CD8-positive, alpha-beta memory T cell (primary cell): ENCODE measurements at regions of chr9 and their contacts with region 1.

Region 1: GRCh38 chr9:30723656-30724055 is 1660.8 kb upstream of the ACO1 start:
- DNase-seq: no peak
- H3K4me3 ChIP-seq: no peak overlapping the region
- H3K4me3 Mint-ChIP-seq: no peak overlapping the region
- H3K27ac ChIP-seq: no peak overlapping the region
- H3K27ac Mint-ChIP-seq: no peak overlapping the region
- H3K4me1 ChIP-seq: no peaks in the 10 kb centered on the region
- H3K4me1 Mint-ChIP-seq: no peaks in the 10 kb centered on the region
- H3K27me3 ChIP-seq: no peaks in the 10 kb centered on the region
- H3K27me3 Mint-ChIP-seq: no peaks in the 10 kb centered on the region

Region 2: GRCh38 chr9:29974197-29974596 is 749.5 kb before region 1 on chr9:
- CTCF ChIA-PET with region 1: no interaction called
- POLR2A ChIA-PET with region 1: interaction called, 21 read pairs
- DNase-seq: no peak
- H3K4me3 ChIP-seq: no peak overlapping the region
- H3K4me3 Mint-ChIP-seq: no peak overlapping the region
- H3K27ac ChIP-seq: no peak overlapping the region
- H3K27ac Mint-ChIP-seq: no peak overlapping the region
- H3K4me1 ChIP-seq: no peaks in the 10 kb centered on the region
- H3K4me1 Mint-ChIP-seq: no peaks in the 10 kb centered on the region
- H3K27me3 ChIP-seq: no peaks in the 10 kb centered on the region
- H3K27me3 Mint-ChIP-seq: no peaks in the 10 kb centered on the region